ENCODE measurements at regions of chr21 and their contacts with region 1.

Region 1: DNA sequence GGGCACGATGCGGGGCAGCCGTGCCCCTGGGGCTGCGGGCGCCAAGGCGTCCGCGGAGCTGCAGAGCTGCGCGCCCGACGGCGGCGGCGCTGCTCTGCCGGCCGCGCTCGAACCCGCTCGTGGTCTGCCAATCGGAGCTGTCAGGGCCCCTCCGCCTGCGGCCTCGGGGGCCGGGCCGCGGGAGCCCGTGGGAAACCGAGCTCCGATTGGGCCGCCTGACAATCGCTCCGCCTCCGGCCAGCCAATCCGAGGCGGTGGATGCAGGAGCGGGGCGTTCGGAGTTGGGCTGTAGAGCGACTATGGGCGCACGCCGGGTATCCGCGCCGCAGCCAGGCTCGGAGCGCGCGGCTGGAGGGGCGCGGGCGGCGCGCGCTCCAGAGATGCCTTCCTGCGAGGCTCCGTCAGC is 100.5 kb upstream of the SOD1 start:
- DNase-seq: peak; percentile 85 to 96 (median 92)
- ATAC-seq: peak; percentile 94
- H3K4me3 ChIP-seq: peak overlapping the region; percentile 82
- H3K4me3 Mint-ChIP-seq: peak overlapping the region; percentile 87 to 98 (median 94)
- H3K27ac ChIP-seq: peak overlapping the region; percentile 52
- H3K27ac Mint-ChIP-seq: peak overlapping the region in 4 of 9 donors; percentile 45 to 75 (median 65)
- H3K4me1 ChIP-seq: peaks cover 3 to 5% of the 10 kb centered on the region in 2 donors
- H3K4me1 Mint-ChIP-seq: peaks cover 18 to 51% (median 34%) of the 10 kb centered on the region in 7 donors
- H3K27me3 ChIP-seq: no peaks in the 10 kb centered on the region
- H3K27me3 Mint-ChIP-seq: peaks cover 6 to 47% (median 25%) of the 10 kb centered on the region in 5 donors

Region 2: GRCh38 chr21:31132574-31133242 is 426.3 kb before region 1 on chr21:
- CTCF ChIA-PET with region 1: no interaction called
- POLR2A ChIA-PET with region 1: interaction called, 3 read pairs
- intact Hi-C with region 1: loop called (anchors 1 to 2 kb)
- DNase-seq: peak in 8 of 9 donors; percentile 58 to 94 (median 92)
- ATAC-seq: peak; percentile 96
- H3K4me3 ChIP-seq: peak overlapping the region; percentile 59
- H3K4me3 Mint-ChIP-seq: peak overlapping the region; percentile 83 to 91 (median 86)
- H3K27ac ChIP-seq: no peak overlapping the region
- H3K27ac Mint-ChIP-seq: peak overlapping the region; percentile 84 to 96 (median 94)
- H3K4me1 ChIP-seq: peaks cover 25 to 50% of the 10 kb centered on the region in 2 donors
- H3K4me1 Mint-ChIP-seq: peaks cover 41 to 75% (median 69%) of the 10 kb centered on the region in 7 donors
- H3K27me3 ChIP-seq: no peaks in the 10 kb centered on the region
- H3K27me3 Mint-ChIP-seq: no peaks in the 10 kb centered on the region

Region 3: DNA sequence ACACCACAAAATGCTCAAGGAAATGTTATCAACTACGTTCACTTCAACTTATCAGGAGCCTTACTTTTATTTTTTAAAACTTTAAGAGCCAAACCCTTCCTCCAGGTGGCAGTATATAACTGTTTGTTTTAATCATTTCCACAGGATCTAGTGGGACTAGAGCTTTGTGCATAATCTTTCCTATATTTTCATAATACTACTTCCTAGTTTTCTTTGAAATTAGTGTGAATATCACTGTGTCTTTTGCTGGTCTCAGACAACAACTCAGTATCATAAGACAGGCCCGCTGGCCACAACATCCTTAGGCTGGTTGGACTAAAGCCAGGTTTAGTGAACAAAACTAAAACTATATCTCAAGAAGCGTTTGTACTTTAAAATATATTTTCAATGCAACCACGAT is 360.4 kb before region 1 on chr21:
- CTCF ChIA-PET with region 1: interaction called, 6 read pairs
- POLR2A ChIA-PET with region 1: interaction called, 3 read pairs
- intact Hi-C with region 1: loop called in 1 of 2 experiments (anchors 1 kb)
- DNase-seq: peak in 5 of 9 donors; percentile 51 to 63 (median 58)
- ATAC-seq: peak; percentile 74
- H3K4me3 ChIP-seq: no peak overlapping the region
- H3K4me3 Mint-ChIP-seq: peak overlapping the region in 3 of 10 donors; percentile 11 to 40 (median 13)
- H3K27ac ChIP-seq: no peak overlapping the region
- H3K27ac Mint-ChIP-seq: no peak overlapping the region
- H3K4me1 ChIP-seq: no peaks in the 10 kb centered on the region
- H3K4me1 Mint-ChIP-seq: peaks cover 14 to 42% (median 36%) of the 10 kb centered on the region in 7 donors
- H3K27me3 ChIP-seq: no peaks in the 10 kb centered on the region
- H3K27me3 Mint-ChIP-seq: no peaks in the 10 kb centered on the region

Region 4: GRCh38 chr21:31397515-31397926 is 161.4 kb before region 1 on chr21:
- CTCF ChIA-PET with region 1: no interaction called
- POLR2A ChIA-PET with region 1: no interaction called
- intact Hi-C with region 1: loop called in 1 of 2 experiments (anchors 1 kb)
- DNase-seq: no peak
- ATAC-seq: no peak
- H3K4me3 ChIP-seq: no peak overlapping the region
- H3K4me3 Mint-ChIP-seq: peak overlapping the region; percentile 40 to 84 (median 72)
- H3K27ac ChIP-seq: no peak overlapping the region
- H3K27ac Mint-ChIP-seq: peak overlapping the region; percentile 5 to 91 (median 61)
- H3K4me1 ChIP-seq: peaks cover 12 to 41% of the 10 kb centered on the region in 2 donors
- H3K4me1 Mint-ChIP-seq: peaks cover 20 to 77% (median 58%) of the 10 kb centered on the region in 7 donors
- H3K27me3 ChIP-seq: no peaks in the 10 kb centered on the region
- H3K27me3 Mint-ChIP-seq: no peaks in the 10 kb centered on the region

Region 5: GRCh38 chr21:31460980-31461379 is 98.0 kb before region 1 on chr21:
- CTCF ChIA-PET with region 1: no interaction called
- POLR2A ChIA-PET with region 1: no interaction called
- intact Hi-C with region 1: no loop called
- DNase-seq: peak in 6 of 9 donors; percentile 23 to 54 (median 36)
- ATAC-seq: peak; percentile 85
- H3K4me3 ChIP-seq: no peak overlapping the region
- H3K4me3 Mint-ChIP-seq: peak overlapping the region; percentile 11 to 77 (median 52)
- H3K27ac ChIP-seq: no peak overlapping the region
- H3K27ac Mint-ChIP-seq: peak overlapping the region in 5 of 9 donors; percentile 18 to 75 (median 62)
- H3K4me1 ChIP-seq: peaks cover 0 to 3% of the 10 kb centered on the region in 2 donors
- H3K4me1 Mint-ChIP-seq: peaks cover 3 to 21% (median 16%) of the 10 kb centered on the region in 7 donors
- H3K27me3 ChIP-seq: no peaks in the 10 kb centered on the region
- H3K27me3 Mint-ChIP-seq: peaks cover 0 to 12% (median 0%) of the 10 kb centered on the region in 5 donors

Region 6: DNA sequence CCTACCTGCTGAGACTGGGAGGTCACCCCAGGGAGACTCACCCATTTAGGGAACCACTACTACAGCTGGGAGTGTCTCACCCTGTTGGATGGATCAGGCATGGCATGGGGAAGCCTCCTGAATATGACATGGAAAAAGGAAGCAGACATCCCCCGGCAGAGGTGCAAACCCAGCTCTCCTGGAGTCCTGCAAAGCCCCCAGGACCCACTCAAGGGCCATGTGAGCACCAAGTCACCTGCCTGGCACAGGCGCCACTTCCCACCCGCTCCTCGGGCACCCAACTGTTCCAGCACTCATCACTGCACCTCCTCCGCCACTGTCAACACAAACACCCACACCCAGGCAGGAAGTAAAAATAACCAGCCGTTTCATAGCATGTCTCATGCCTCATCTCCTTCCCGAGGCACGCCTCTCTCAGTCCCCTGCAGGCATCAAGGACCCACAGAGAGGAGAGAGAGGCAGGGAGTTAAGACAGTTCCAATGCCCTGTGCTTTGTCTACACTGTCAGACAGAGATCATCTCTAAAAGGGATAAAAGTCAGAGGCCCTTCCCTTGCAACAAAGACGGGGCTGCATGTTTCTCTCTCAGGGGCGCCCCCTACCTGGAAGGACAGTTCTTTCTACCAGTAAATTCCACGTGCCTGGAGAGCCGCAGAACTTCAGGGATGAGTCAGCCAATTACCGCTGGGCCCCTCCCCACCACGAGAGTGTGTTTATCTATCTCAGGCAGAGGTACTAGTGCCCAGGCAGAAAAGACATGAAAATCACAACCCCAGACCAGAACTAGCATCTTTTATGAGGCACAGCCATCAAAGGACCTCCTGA is 49.6 kb before region 1 on chr21:
- CTCF ChIA-PET with region 1: no interaction called
- POLR2A ChIA-PET with region 1: interaction called, 4 read pairs
- intact Hi-C with region 1: loop called (anchors 1 kb)
- DNase-seq: peak; percentile 24 to 81 (median 54)
- ATAC-seq: peak; percentile 66
- H3K4me3 ChIP-seq: no peak overlapping the region
- H3K4me3 Mint-ChIP-seq: peak overlapping the region in 8 of 10 donors; percentile 32 to 79 (median 60)
- H3K27ac ChIP-seq: no peak overlapping the region
- H3K27ac Mint-ChIP-seq: peak overlapping the region in 7 of 9 donors; percentile 7 to 83 (median 78)
- H3K4me1 ChIP-seq: peaks cover 6 to 16% of the 10 kb centered on the region in 2 donors
- H3K4me1 Mint-ChIP-seq: peaks cover 14 to 47% (median 34%) of the 10 kb centered on the region in 7 donors
- H3K27me3 ChIP-seq: no peaks in the 10 kb centered on the region
- H3K27me3 Mint-ChIP-seq: peaks cover 0 to 57% (median 0%) of the 10 kb centered on the region in 5 donors

Region 7: DNA sequence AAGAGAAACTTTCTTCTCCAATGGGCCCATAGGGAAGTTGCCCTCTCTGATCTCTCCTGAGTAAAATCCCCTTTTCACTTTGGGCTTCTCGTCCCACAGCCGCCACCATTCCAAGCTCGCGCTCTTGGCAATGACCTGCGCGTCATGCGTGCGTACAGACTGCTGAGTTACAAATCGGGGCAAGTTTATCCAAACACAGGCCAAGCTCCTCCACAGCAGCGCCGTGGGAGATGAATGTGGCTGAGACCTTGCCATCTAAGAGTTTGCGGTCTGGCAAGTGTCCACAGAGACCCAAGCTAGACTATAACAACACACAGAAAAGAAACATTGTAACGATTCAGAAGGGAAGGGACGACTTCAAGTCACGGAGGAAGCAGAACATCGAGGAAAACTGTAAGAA is 15.8 kb before region 1 on chr21:
- CTCF ChIA-PET with region 1: no interaction called
- POLR2A ChIA-PET with region 1: no interaction called
- intact Hi-C with region 1: no loop called
- DNase-seq: no peak
- ATAC-seq: no peak
- H3K4me3 ChIP-seq: no peak overlapping the region
- H3K4me3 Mint-ChIP-seq: no peak overlapping the region
- H3K27ac ChIP-seq: no peak overlapping the region
- H3K27ac Mint-ChIP-seq: peak overlapping the region in 1 of 9 donors; percentile 25
- H3K4me1 ChIP-seq: no peaks in the 10 kb centered on the region
- H3K4me1 Mint-ChIP-seq: no peaks in the 10 kb centered on the region
- H3K27me3 ChIP-seq: no peaks in the 10 kb centered on the region
- H3K27me3 Mint-ChIP-seq: peaks cover 0 to 30% (median 0%) of the 10 kb centered on the region in 5 donors

Region 8: DNA sequence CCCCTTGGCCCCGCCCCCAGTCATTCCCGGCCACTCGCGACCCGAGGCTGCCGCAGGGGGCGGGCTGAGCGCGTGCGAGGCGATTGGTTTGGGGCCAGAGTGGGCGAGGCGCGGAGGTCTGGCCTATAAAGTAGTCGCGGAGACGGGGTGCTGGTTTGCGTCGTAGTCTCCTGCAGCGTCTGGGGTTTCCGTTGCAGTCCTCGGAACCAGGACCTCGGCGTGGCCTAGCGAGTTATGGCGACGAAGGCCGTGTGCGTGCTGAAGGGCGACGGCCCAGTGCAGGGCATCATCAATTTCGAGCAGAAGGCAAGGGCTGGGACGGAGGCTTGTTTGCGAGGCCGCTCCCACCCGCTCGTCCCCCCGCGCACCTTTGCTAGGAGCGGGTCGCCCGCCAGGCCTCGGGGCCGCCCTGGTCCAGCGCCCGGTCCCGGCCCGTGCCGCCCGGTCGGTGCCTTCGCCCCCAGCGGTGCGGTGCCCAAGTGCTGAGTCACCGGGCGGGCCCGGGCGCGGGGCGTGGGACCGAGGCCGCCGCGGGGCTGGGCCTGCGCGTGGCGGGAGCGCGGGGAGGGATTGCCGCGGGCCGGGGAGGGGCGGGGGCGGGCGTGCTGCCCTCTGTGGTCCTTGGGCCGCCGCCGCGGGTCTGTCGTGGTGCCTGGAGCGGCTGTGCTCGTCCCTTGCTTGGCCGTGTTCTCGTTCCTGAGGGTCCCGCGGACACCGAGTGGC is 100.7 kb after region 1 on chr21 and contains the start of gene SOD1:
- CTCF ChIA-PET with region 1: no interaction called
- POLR2A ChIA-PET with region 1: no interaction called
- intact Hi-C with region 1: loop called (anchors 1 kb)
- DNase-seq: peak in 8 of 9 donors; percentile 20 to 98 (median 97)
- ATAC-seq: peak; percentile 97
- H3K4me3 ChIP-seq: peak within 1 kb of the TSS; percentile 79
- H3K4me3 Mint-ChIP-seq: peak within 1 kb of the TSS; percentile 95 to 100 (median 100)
- H3K27ac ChIP-seq: peak within 1 kb of the TSS; percentile 88
- H3K27ac Mint-ChIP-seq: peak within 1 kb of the TSS; percentile 97 to 100 (median 98)
- H3K4me1 ChIP-seq: peaks cover 15 to 50% of the 10 kb centered on the region in 2 donors
- H3K4me1 Mint-ChIP-seq: peaks cover 40 to 80% (median 68%) of the 10 kb centered on the region in 7 donors
- H3K27me3 ChIP-seq: no peaks in the 10 kb centered on the region
- H3K27me3 Mint-ChIP-seq: no peaks in the 10 kb centered on the region
- total RNA-seq, gene SOD1: 110 to 218 (median 182) TPM

Region 9: GRCh38 chr21:31921079-31921478 is 362.1 kb after region 1 on chr21:
- CTCF ChIA-PET with region 1: no interaction called
- POLR2A ChIA-PET with region 1: no interaction called
- intact Hi-C with region 1: no loop called
- DNase-seq: no peak
- ATAC-seq: no peak
- H3K4me3 ChIP-seq: no peak overlapping the region
- H3K4me3 Mint-ChIP-seq: no peak overlapping the region
- H3K27ac ChIP-seq: no peak overlapping the region
- H3K27ac Mint-ChIP-seq: no peak overlapping the region
- H3K4me1 ChIP-seq: no peaks in the 10 kb centered on the region
- H3K4me1 Mint-ChIP-seq: no peaks in the 10 kb centered on the region
- H3K27me3 ChIP-seq: no peaks in the 10 kb centered on the region
- H3K27me3 Mint-ChIP-seq: peaks cover 0 to 14% (median 8%) of the 10 kb centered on the region in 5 donors

Region 10: GRCh38 chr21:32064281-32064910 is 505.4 kb after region 1 on chr21:
- CTCF ChIA-PET with region 1: no interaction called
- POLR2A ChIA-PET with region 1: no interaction called
- intact Hi-C with region 1: no loop called
- DNase-seq: no peak
- ATAC-seq: no peak
- H3K4me3 ChIP-seq: no peak overlapping the region
- H3K4me3 Mint-ChIP-seq: no peak overlapping the region
- H3K27ac ChIP-seq: no peak overlapping the region
- H3K27ac Mint-ChIP-seq: no peak overlapping the region
- H3K4me1 ChIP-seq: no peaks in the 10 kb centered on the region
- H3K4me1 Mint-ChIP-seq: no peaks in the 10 kb centered on the region
- H3K27me3 ChIP-seq: no peaks in the 10 kb centered on the region
- H3K27me3 Mint-ChIP-seq: peaks cover 0 to 33% (median 14%) of the 10 kb centered on the region in 5 donors

Region 11: GRCh38 chr21:32278518-32279376 is 719.8 kb after region 1 on chr21 and contains the start of gene MIS18A:
- CTCF ChIA-PET with region 1: no interaction called
- POLR2A ChIA-PET with region 1: no interaction called
- intact Hi-C with region 1: loop called in 1 of 2 experiments (anchors 2 kb)
- DNase-seq: peak; percentile 92 to 98 (median 95)
- ATAC-seq: peak; percentile 97
- H3K4me3 ChIP-seq: peak within 1 kb of the TSS; percentile 90
- H3K4me3 Mint-ChIP-seq: peak within 1 kb of the TSS; percentile 95 to 100 (median 98)
- H3K27ac ChIP-seq: peak within 1 kb of the TSS; percentile 70
- H3K27ac Mint-ChIP-seq: peak within 1 kb of the TSS; percentile 90 to 97 (median 94)
- H3K4me1 ChIP-seq: peaks cover 14 to 16% of the 10 kb centered on the region in 2 donors
- H3K4me1 Mint-ChIP-seq: peaks cover 8 to 36% (median 33%) of the 10 kb centered on the region in 7 donors
- H3K27me3 ChIP-seq: no peaks in the 10 kb centered on the region
- H3K27me3 Mint-ChIP-seq: no peaks in the 10 kb centered on the region
- total RNA-seq, gene MIS18A: 3.3 to 16.4 (median 8.4) TPM